ENCODE measurements at regions of chr5 and their contacts with region 1.

Region 1: GRCh38 chr5:177382423-177383029 is 1.7 kb upstream of the SLC34A1 start:
- DNase-seq: no peak
- ATAC-seq: peak; percentile 10
- H3K4me3 ChIP-seq: no peak overlapping the region
- H3K27ac ChIP-seq: no peak overlapping the region
- H3K4me1 ChIP-seq: peaks cover 72% of the 10 kb centered on the region
- H3K27me3 ChIP-seq: peaks cover 7 to 16% of the 10 kb centered on the region in 2 experiments; a peak in 3 of 5 replicates
- CTCF ChIP-seq: peak; percentile 71
- EP300 ChIP-seq: no peak
- POLR2A ChIP-seq: no peak
- RAD21 ChIP-seq: peak; percentile 60; the same call in 1 of the 2 replicates

Region 2: GRCh38 chr5:177022384-177023308 is 359.9 kb before region 1 on chr5 and contains the start of gene ZNF346:
- CTCF ChIA-PET with region 1: no interaction called
- POLR2A ChIA-PET with region 1: no interaction called
- in situ Hi-C with region 1: no loop called
- intact Hi-C with region 1: no loop called
- DNase-seq: peak; percentile 90
- ATAC-seq: peak; percentile 94
- H3K4me3 ChIP-seq: peak within 1 kb of the TSS; percentile 60 to 93 (median 91)
- H3K27ac ChIP-seq: peak within 1 kb of the TSS; percentile 82
- H3K4me1 ChIP-seq: peaks cover 32% of the 10 kb centered on the region
- H3K27me3 ChIP-seq: no peaks in the 10 kb centered on the region; a peak in 1 of 5 replicates
- CTCF ChIP-seq: peak; percentile 71
- EP300 ChIP-seq: no peak
- POLR2A ChIP-seq: peak; percentile 81 to 85
- RAD21 ChIP-seq: peak; percentile 60
- total RNA-seq, gene ZNF346: 19.4 and 20.1 TPM in 2 replicates

Region 3: DNA sequence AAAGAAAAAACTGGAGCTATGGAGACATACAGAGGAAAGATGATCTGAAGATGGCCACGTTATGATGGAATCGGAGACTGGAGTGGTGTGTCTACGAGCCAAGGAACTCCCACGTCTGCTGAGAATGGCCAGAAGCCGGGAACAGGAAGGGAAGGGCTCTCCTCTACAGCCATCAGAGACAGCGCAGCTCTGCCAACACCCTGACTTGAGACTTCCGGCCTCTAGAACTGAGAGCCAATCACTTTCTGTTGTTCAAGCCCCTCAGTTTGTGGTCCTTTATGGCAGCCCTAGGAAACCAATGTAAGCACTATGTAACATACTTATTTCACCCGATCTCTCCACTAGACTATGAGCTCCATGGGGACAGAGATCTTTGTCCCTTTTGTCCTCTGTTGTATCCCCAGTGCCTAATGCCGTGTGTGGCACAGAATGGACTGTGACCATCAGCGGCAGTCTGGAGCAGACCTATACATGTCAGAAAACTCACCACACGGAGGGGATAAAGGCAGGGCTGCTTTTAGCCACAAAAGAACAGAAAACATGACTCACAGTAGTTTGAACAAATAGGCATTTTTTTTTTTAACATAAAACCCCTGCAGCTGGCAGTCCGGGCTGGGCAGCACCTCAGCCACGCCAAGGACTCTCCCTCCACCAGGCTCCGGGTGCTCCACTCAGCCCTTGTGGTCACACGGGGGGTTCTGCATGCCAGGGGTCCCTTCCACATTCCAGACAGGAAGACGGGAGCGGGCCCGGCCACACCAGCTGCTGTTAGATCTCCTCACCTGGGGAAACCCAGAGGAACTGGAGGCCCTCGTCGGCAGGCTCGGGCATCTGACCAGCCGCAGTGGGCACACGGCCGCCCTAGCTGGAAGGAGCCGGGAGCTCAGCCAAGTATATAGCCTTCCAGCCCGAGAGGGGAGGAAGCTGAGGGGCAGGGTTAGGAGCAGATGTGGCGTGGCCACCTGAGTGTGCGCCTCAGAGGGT is 54.7 kb before region 1 on chr5:
- CTCF ChIA-PET with region 1: no interaction called
- POLR2A ChIA-PET with region 1: interaction called, 24 read pairs
- in situ Hi-C with region 1: no loop called
- intact Hi-C with region 1: no loop called
- DNase-seq: peak; percentile 68
- ATAC-seq: peak; percentile 78
- H3K4me3 ChIP-seq: no peak overlapping the region; a peak in 2 of 6 replicates
- H3K27ac ChIP-seq: peak overlapping the region; percentile 83
- H3K4me1 ChIP-seq: peaks cover 60% of the 10 kb centered on the region
- H3K27me3 ChIP-seq: no peaks in the 10 kb centered on the region
- CTCF ChIP-seq: peak; percentile 29; the same call in 1 of the 2 replicates
- EP300 ChIP-seq: no peak
- POLR2A ChIP-seq: no peak
- RAD21 ChIP-seq: no peak

Region 4: GRCh38 chr5:177362610-177363507 is 19.7 kb before region 1 on chr5:
- CTCF ChIA-PET with region 1: no interaction called
- POLR2A ChIA-PET with region 1: interaction called, 239 read pairs
- in situ Hi-C with region 1: no loop called
- intact Hi-C with region 1: no loop called
- DNase-seq: no peak
- ATAC-seq: peak; percentile 24
- H3K4me3 ChIP-seq: peak overlapping the region; percentile 57 to 81 (median 60)
- H3K27ac ChIP-seq: no peak overlapping the region
- H3K4me1 ChIP-seq: peaks cover 95% of the 10 kb centered on the region
- H3K27me3 ChIP-seq: peaks cover 0 to 23% of the 10 kb centered on the region in 2 experiments; a peak in 4 of 5 replicates
- CTCF ChIP-seq: peak; percentile 14; the same call in 1 of the 2 replicates
- EP300 ChIP-seq: no peak
- POLR2A ChIP-seq: no peak
- RAD21 ChIP-seq: no peak

Region 5: DNA sequence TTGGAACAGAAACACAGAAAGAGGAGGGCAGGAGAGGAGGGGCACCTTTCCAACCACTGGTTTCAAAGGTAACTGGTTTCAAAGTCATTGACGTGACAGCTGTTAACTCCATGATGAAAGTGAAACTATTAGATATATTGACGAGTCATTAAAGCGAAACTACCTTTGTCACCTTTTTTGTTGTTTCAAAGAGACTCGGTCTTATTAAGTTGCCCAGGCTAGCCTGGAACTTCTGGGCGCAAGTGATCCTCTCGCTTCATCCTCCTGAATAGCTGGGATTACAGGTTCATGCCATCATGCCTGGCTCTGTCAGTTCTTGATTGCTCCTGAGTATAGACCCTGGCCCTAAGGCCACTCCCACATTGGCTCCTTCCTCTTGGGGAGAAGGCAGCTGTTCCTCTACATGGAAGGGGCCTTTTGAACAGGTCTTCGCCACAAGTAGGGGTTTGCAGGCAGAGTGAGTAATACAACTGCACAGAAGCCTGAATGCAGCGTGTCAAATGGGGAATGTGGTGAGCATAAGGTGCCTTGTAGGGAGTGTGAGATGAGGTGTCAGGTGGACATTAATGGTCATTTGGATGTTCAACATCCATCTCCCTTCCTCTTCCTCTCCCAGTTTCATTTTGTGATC is 30.2 kb after region 1 on chr5:
- CTCF ChIA-PET with region 1: no interaction called
- POLR2A ChIA-PET with region 1: interaction called, 22 read pairs
- in situ Hi-C with region 1: no loop called
- intact Hi-C with region 1: no loop called
- DNase-seq: no peak
- ATAC-seq: no peak
- H3K4me3 ChIP-seq: peak overlapping the region in 2 of 3 experiments; percentile 8 to 18; a peak in 1 of 6 replicates
- H3K27ac ChIP-seq: no peak overlapping the region
- H3K4me1 ChIP-seq: peaks cover 42% of the 10 kb centered on the region
- H3K27me3 ChIP-seq: 0 out of 5 replicates have a peak, but pooled peaks cover 0 to 9% of the 10 kb centered on the region in 2 experiments
- CTCF ChIP-seq: no peak
- EP300 ChIP-seq: no peak
- POLR2A ChIP-seq: no peak
- RAD21 ChIP-seq: no peak

Region 6: DNA sequence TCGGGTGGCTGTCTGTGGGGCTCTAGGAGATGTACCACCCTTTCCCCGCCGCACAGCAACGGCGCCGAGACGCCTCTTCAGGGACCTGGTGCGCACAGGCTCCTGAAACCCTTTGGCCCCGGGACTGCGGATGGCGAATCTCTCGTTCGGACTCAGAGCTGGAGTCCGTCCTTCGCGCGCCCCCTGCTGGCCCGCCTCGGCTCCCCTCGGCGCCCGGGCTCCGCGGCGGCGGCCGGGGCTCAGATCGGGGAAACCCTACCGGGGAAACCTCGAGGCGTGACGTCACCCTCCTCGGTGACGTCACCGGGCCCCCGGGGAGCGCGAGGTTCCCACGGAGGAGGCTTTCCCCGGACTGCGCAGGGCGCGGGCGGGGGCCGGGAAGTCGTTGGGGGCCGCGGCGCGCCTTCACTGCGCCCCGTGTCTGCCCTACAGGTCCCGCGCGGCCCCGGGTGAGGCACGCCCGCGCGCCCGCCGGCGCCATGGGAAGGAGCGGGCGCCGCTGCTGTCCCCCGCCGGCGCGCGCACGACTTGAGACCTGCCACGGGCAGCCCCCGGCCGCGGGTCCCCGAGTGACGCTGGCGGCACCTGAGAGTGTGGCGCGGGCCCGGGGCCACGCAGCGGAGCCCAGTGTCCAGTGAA is 72.0 kb after region 1 on chr5:
- CTCF ChIA-PET with region 1: interaction called, 3 read pairs
- POLR2A ChIA-PET with region 1: interaction called, 29 read pairs
- in situ Hi-C with region 1: loop called (anchors 5 kb)
- intact Hi-C with region 1: no loop called
- DNase-seq: peak; percentile 79
- ATAC-seq: peak; percentile 54
- H3K4me3 ChIP-seq: peak overlapping the region; percentile 81 to 89 (median 87)
- H3K27ac ChIP-seq: peak overlapping the region; percentile 84
- H3K4me1 ChIP-seq: peaks cover 35% of the 10 kb centered on the region
- H3K27me3 ChIP-seq: no peaks in the 10 kb centered on the region; a peak in 1 of 5 replicates
- CTCF ChIP-seq: peak; percentile 85
- EP300 ChIP-seq: no peak
- POLR2A ChIP-seq: 0 out of 4 replicates have a peak, but pooled peaks of 1 of the 2 experiments have one; percentile 23
- RAD21 ChIP-seq: peak; percentile 97

Region 7: GRCh38 chr5:177497292-177498033 is 114.9 kb after region 1 on chr5 and contains the start of gene PDLIM7:
- CTCF ChIA-PET with region 1: no interaction called
- POLR2A ChIA-PET with region 1: interaction called, 28 read pairs
- in situ Hi-C with region 1: no loop called
- intact Hi-C with region 1: no loop called
- DNase-seq: peak; percentile 94
- ATAC-seq: peak; percentile 77
- H3K4me3 ChIP-seq: peak within 1 kb of the TSS; percentile 65 to 85 (median 68)
- H3K27ac ChIP-seq: peak within 1 kb of the TSS; percentile 75
- H3K4me1 ChIP-seq: peaks cover 57% of the 10 kb centered on the region
- H3K27me3 ChIP-seq: peaks cover 0 to 29% of the 10 kb centered on the region in 2 experiments; a peak in 3 of 5 replicates
- CTCF ChIP-seq: peak; percentile 27; the same call in 1 of the 2 replicates
- EP300 ChIP-seq: no peak
- POLR2A ChIP-seq: peak in 1 of 2 experiments; percentile 87; a peak in 2 of 4 replicates
- RAD21 ChIP-seq: no peak
- total RNA-seq, gene PDLIM7: 17.7 and 21.1 TPM in 2 replicates

Measured in HepG2 (cell line).